T-cell (primary cell): ENCODE measurements at regions of chr17 and their contacts with region 1.

Region 1: DNA sequence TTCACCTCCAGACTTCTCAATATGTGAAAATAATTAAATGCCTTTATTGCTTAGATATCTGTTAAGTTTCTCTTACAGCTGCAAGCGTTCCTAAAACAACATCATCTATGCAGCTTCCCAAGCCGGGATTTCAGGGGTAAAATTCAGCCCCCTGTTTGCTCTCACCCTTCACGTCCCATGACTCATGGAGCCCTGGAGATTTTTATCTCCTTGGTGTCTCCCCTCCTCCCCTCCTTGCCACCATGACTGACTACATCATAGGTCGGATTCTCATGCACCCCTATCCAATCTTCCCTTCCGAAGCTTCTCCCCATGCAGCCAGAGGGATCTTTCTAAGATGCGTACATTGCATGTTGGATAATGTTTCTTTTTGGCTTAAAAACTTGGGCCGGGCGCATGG is 21.0 kb upstream of the CACNG4 start:
- DNase-seq: no peak
- ATAC-seq: no peak
- H3K4me3 ChIP-seq: no peak overlapping the region
- H3K4me3 Mint-ChIP-seq: no peak overlapping the region
- H3K27ac ChIP-seq: no peak overlapping the region
- H3K27ac Mint-ChIP-seq: peak overlapping the region in 1 of 2 donors; percentile 9
- H3K4me1 ChIP-seq: peaks cover 0 to 3% of the 10 kb centered on the region in 2 experiments
- H3K4me1 Mint-ChIP-seq: peaks cover 5 to 19% (median 12%) of the 10 kb centered on the region in 3 donors
- H3K27me3 ChIP-seq: peaks cover 0 to 76% of the 10 kb centered on the region in 2 experiments
- H3K27me3 Mint-ChIP-seq: peaks cover 64 to 82% of the 10 kb centered on the region in 2 donors

Region 2: DNA sequence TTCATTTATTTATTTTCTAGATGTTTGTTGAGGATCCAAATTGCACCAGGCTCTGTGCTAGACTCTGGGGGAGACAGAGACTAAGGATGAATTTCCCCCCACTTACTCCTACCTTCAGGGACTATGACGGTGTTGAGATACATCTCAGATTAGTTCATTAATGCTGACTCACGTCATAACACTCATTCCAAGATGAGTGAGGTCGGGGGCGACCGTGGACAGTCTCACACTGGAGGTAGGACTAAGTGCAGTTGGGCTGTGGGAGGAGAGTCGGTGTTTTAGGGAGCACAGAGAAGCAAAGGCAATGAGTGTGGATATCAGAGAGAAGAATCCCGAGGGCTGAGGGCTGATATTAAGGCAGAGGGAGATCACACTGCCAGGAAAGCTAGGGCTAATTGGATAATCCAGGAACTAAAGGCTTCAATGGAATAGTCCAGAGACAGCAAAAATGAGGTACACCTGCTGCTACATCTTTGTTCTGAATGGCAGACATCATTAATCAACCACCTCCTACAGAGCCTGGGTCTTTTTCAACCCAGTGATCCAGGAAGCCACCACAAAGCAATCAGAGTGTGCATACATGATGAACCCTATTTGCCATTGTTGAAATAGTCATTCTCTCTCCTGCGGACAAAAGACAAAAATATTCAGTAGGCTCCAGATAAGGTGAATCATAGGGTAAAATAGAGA is 17.5 kb before region 1 on chr17:
- CTCF ChIA-PET with region 1: interaction called in 1 of 2 experiments, 10 read pairs
- POLR2A ChIA-PET with region 1: no interaction called
- DNase-seq: no peak
- ATAC-seq: no peak
- H3K4me3 ChIP-seq: no peak overlapping the region
- H3K4me3 Mint-ChIP-seq: no peak overlapping the region
- H3K27ac ChIP-seq: no peak overlapping the region
- H3K27ac Mint-ChIP-seq: no peak overlapping the region
- H3K4me1 ChIP-seq: no peaks in the 10 kb centered on the region
- H3K4me1 Mint-ChIP-seq: no peaks in the 10 kb centered on the region
- H3K27me3 ChIP-seq: peaks cover 2 to 10% of the 10 kb centered on the region in 2 experiments
- H3K27me3 Mint-ChIP-seq: peaks cover 41 to 50% of the 10 kb centered on the region in 2 donors

Region 3: GRCh38 chr17:66976781-66977201 is 33.3 kb after region 1 on chr17:
- CTCF ChIA-PET with region 1: no interaction called
- POLR2A ChIA-PET with region 1: no interaction called
- DNase-seq: no peak
- ATAC-seq: no peak
- H3K4me3 ChIP-seq: no peak overlapping the region
- H3K4me3 Mint-ChIP-seq: no peak overlapping the region
- H3K27ac ChIP-seq: no peak overlapping the region
- H3K27ac Mint-ChIP-seq: no peak overlapping the region
- H3K4me1 ChIP-seq: no peaks in the 10 kb centered on the region
- H3K4me1 Mint-ChIP-seq: no peaks in the 10 kb centered on the region
- H3K27me3 ChIP-seq: peaks cover 2 to 59% of the 10 kb centered on the region in 2 experiments
- H3K27me3 Mint-ChIP-seq: peaks cover 35 to 50% of the 10 kb centered on the region in 2 donors